SK-N-SH (cell line): ENCODE measurements at regions of chr18 and their contacts with region 1.

Region 1: GRCh38 chr18:50266248-50266704 is at the start of gene CFAP53:
- DNase-seq: peak; percentile 99
- H3K4me3 ChIP-seq: peak within 1 kb of the TSS; percentile 62 to 75
- H3K27ac ChIP-seq: peak within 1 kb of the TSS; percentile 63 to 74; a peak in 3 of 4 replicates
- H3K4me1 ChIP-seq: peaks cover 0 to 6% of the 10 kb centered on the region in 2 experiments; a peak in 1 of 4 replicates
- H3K27me3 ChIP-seq: no peaks in the 10 kb centered on the region
- CTCF ChIP-seq: no peak
- EP300 ChIP-seq: no peak
- RAD21 ChIP-seq: no peak
- polyA plus RNA-seq, gene CFAP53: 1.6 TPM in 2 replicates

Region 2: DNA sequence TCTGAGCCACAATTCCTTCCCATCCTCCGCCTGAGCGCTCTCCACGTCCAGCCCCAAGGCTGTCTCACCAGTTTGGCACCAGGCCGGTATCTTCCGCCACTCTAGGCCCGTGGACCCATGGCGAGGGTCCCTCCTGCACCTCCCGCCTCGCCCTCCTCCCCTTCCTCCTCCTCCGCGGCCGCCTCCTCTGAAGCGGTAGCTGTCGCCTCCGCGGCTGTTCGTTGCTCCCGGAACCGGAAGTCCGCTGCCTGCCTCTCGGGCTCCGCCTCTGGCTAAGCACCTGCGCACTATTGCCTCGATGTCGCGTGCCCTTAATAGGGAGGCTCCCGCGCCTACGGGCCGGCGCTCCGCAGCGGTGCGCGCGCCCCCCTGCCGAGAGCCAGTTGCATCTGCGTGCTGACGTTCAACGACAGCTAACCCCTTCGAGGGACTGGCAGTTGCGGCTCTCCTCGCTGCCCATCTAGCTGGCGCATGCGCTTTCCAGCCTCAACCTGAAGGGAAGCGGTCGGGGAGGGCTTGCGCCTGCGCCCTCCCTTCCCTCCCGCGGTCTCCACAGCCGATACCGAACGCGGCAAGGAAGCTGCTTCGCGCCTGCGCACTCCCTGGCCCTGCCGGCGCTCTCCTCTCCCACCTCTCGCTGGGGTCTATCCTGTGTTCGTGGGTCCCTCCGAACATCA is 15.2 kb after region 1 on chr18 and contains the start of gene MBD1:
- CTCF ChIA-PET with region 1: interaction called, 4 read pairs
- POLR2A ChIA-PET with region 1: interaction called, 11 read pairs
- DNase-seq: peak; percentile 99
- H3K4me3 ChIP-seq: peak within 1 kb of the TSS; percentile 86 to 99
- H3K27ac ChIP-seq: peak within 1 kb of the TSS; percentile 75 to 95
- H3K4me1 ChIP-seq: peaks cover 14 to 29% of the 10 kb centered on the region in 2 experiments; a peak in 3 of 4 replicates
- H3K27me3 ChIP-seq: no peaks in the 10 kb centered on the region
- CTCF ChIP-seq: no peak
- EP300 ChIP-seq: no peak
- RAD21 ChIP-seq: no peak
- polyA plus RNA-seq, gene MBD1: 70.6 and 72.3 TPM in 2 replicates